Mucosa of descending colon (tissue), 3 donors: ENCODE measurements at regions of chr6 and their contacts with region 1.

Region 1: DNA sequence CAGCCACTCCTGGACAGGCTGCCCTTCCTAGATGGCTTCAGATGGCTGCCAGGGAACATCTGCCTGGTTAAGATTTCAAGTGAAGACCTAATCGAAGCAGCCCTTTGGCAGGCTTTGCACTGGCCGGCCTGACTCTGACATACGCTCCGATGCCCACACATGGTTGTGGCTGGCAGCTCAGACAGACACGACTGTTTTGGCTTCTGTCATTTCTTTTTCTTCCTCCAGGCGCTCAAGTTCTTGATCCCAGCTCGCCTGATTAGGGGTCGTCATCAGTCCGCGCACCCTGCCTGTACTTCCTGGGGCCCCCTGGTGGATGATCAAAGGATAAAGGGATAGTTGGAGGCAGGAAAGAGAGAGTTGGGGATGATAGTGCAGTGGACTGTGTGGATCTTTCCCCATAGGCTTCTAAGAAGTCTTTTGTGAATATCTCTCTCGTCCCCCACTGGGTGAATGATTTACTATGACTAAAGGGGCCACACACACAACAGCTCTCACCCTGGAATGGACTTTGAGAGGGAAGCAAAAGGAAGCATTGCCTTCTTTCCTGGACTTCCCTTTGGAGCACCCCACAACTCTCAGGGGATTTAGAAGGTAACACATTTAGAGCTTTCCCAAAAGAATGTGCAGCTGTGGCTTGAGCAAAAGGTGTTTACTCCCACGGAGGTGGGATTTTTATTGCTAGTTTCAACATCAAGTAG is 21.4 kb upstream of the TRAM2 start:
- DNase-seq: peak in 2 of 3 donors; percentile 46 to 59
- ATAC-seq: peak; percentile 59
- H3K4me3 ChIP-seq: no peak overlapping the region
- H3K4me1 ChIP-seq: peaks cover 8% of the 10 kb centered on the region
- CTCF ChIP-seq: peak; percentile 15

Region 2: DNA sequence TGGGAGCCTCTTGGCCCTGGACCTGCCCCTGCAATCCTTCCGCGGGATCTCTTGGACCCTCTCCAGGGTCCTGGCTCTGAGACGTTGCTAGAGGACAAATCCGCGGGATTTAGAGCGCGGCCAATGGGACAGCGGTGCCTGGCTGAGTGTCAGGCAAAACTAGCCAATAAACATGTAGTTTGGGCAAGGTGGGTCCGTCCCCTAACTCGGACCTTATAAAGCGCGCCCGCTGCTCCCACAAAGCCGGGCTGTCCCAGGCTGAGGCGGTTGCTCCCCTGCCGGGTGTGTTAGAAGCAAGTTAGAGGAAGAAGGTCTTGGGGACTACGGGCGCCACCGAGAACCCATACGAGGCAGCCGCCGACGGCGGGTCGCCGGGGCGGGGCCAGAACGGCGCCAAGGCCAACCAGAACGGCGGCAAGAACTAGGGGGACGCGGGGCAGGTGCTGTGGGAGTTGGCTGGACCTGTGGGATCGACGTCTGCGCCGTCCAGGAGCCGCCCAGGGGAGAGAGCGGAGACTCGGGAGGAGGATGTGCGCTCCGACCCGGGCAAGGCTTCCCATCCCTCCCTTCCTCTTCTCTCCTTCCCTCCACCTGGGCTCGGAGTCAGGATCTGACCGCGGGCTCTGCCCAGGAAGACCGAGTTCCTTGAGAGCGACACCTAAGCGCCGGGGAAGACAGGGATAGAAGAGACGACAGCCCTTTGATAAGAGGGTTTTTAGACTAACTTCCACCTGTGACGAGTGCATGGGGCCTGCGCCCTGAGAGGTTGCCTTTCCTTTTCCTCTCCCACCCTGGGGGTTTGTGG is 66.1 kb after region 1 on chr6:
- intact Hi-C with region 1: loop called in 1 of 2 experiments (anchors 10 kb)
- DNase-seq: peak; percentile 91 to 94 (median 92)
- ATAC-seq: peak; percentile 98
- H3K4me3 ChIP-seq: peak overlapping the region; percentile 56
- H3K4me1 ChIP-seq: peaks cover 7% of the 10 kb centered on the region
- CTCF ChIP-seq: no peak

Region 3: DNA sequence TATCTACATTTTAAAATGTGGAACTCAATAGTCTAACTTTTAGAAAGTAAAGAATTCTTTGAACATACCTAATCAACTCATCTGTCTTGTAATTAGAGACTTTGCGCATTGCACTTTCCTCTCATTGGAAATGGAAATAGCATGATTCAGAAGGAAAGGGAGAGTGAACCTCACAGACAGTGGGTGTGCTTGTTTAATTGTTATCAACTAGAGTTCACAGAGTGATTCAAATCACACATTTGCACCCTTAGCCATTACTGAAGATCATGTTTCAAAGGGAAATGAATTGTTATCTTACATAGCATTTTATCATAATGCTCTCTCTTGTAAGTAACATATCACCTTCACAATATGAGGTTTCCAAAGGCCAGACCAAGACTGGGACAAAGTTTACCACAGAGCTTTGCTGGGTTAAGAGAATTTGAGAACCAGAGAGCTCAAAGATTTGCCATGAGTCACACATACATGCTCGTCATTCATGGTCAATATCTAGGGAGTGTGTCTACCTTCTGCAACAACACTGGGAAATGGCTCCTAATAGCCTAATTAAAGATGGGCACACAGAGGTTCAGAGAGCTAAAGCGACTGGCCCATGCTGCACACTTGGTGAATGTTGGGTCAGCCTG is 289.8 kb after region 1 on chr6:
- intact Hi-C with region 1: no loop called
- DNase-seq: no peak
- ATAC-seq: no peak
- H3K4me3 ChIP-seq: no peak overlapping the region
- H3K4me1 ChIP-seq: no peaks in the 10 kb centered on the region
- CTCF ChIP-seq: no peak